ENCODE measurements at regions of chr16 and their contacts with region 1.

Region 1: GRCh38 chr16:10385725-10386516 is at the start of gene ATF7IP2:
- DNase-seq: peak; percentile 95
- ATAC-seq: peak; percentile 99
- H3K4me3 Mint-ChIP-seq: peak within 1 kb of the TSS; percentile 95
- H3K27ac Mint-ChIP-seq: peak within 1 kb of the TSS; percentile 98
- H3K4me1 Mint-ChIP-seq: peaks cover 43% of the 10 kb centered on the region
- H3K27me3 Mint-ChIP-seq: no peaks in the 10 kb centered on the region
- total RNA-seq, gene ATF7IP2: 20.0 to 21.9 TPM

Region 2: GRCh38 chr16:10256784-10257641 is 128.9 kb before region 1 on chr16:
- CTCF ChIA-PET with region 1: no interaction called
- POLR2A ChIA-PET with region 1: no interaction called
- intact Hi-C with region 1: loop called in 1 of 2 experiments (anchors 2 kb)
- DNase-seq: peak; percentile 66
- ATAC-seq: peak; percentile 63
- H3K4me3 Mint-ChIP-seq: no peak overlapping the region
- H3K27ac Mint-ChIP-seq: no peak overlapping the region
- H3K4me1 Mint-ChIP-seq: peaks cover 5% of the 10 kb centered on the region
- H3K27me3 Mint-ChIP-seq: no peaks in the 10 kb centered on the region

Region 3: GRCh38 chr16:10266809-10267208 is 119.1 kb before region 1 on chr16:
- CTCF ChIA-PET with region 1: no interaction called
- POLR2A ChIA-PET with region 1: interaction called, 4 read pairs
- intact Hi-C with region 1: loop called in 1 of 2 experiments (anchors 2 kb)
- DNase-seq: peak; percentile 71
- ATAC-seq: peak; percentile 98
- H3K4me3 Mint-ChIP-seq: no peak overlapping the region
- H3K27ac Mint-ChIP-seq: peak overlapping the region; percentile 63
- H3K4me1 Mint-ChIP-seq: peaks cover 12% of the 10 kb centered on the region
- H3K27me3 Mint-ChIP-seq: no peaks in the 10 kb centered on the region

Region 4: GRCh38 chr16:10325783-10326543 is 60.0 kb before region 1 on chr16:
- CTCF ChIA-PET with region 1: no interaction called
- POLR2A ChIA-PET with region 1: no interaction called
- intact Hi-C with region 1: loop called in 1 of 2 experiments (anchors 10 kb)
- DNase-seq: no peak
- ATAC-seq: no peak
- H3K4me3 Mint-ChIP-seq: no peak overlapping the region
- H3K27ac Mint-ChIP-seq: no peak overlapping the region
- H3K4me1 Mint-ChIP-seq: peaks cover 18% of the 10 kb centered on the region
- H3K27me3 Mint-ChIP-seq: no peaks in the 10 kb centered on the region

Region 5: GRCh38 chr16:10743610-10744393 is 357.9 kb after region 1 on chr16 and contains the start of gene NUBP1:
- CTCF ChIA-PET with region 1: no interaction called
- POLR2A ChIA-PET with region 1: no interaction called
- intact Hi-C with region 1: loop called in 1 of 2 experiments (anchors 1 kb)
- DNase-seq: peak; percentile 100
- ATAC-seq: peak; percentile 95
- H3K4me3 Mint-ChIP-seq: peak within 1 kb of the TSS; percentile 75
- H3K27ac Mint-ChIP-seq: peak within 1 kb of the TSS; percentile 98
- H3K4me1 Mint-ChIP-seq: peaks cover 30% of the 10 kb centered on the region
- H3K27me3 Mint-ChIP-seq: no peaks in the 10 kb centered on the region
- total RNA-seq, gene NUBP1: 25.9 to 33.1 TPM